AG04450 (cell line): ENCODE measurements at regions of chr11 and their contacts with region 1.

Region 1: GRCh38 chr11:64216879-64217278 is 9.1 kb downstream of the TRPT1 start:
- DNase-seq: no peak
- H3K4me3 ChIP-seq: no peak overlapping the region
- H3K27ac ChIP-seq: no peak overlapping the region
- H3K27me3 ChIP-seq: no peaks in the 10 kb centered on the region
- CTCF ChIP-seq: no peak

Region 2: GRCh38 chr11:64040684-64041322 is 176.1 kb before region 1 on chr11:
- CTCF ChIA-PET with region 1: no interaction called
- POLR2A ChIA-PET with region 1: no interaction called
- DNase-seq: no peak
- H3K4me3 ChIP-seq: no peak overlapping the region
- H3K27ac ChIP-seq: no peak overlapping the region
- H3K27me3 ChIP-seq: peaks cover 20% of the 10 kb centered on the region
- CTCF ChIP-seq: peak; percentile 42

Region 3: GRCh38 chr11:64176751-64177150 is 40.1 kb before region 1 on chr11:
- CTCF ChIA-PET with region 1: no interaction called
- POLR2A ChIA-PET with region 1: interaction called, 12 read pairs
- DNase-seq: no peak
- H3K4me3 ChIP-seq: no peak overlapping the region
- H3K27ac ChIP-seq: no peak overlapping the region
- H3K27me3 ChIP-seq: no peaks in the 10 kb centered on the region
- CTCF ChIP-seq: no peak